Endothelial cell of umbilical vein (primary cell): ENCODE measurements at regions of chr12 and their contacts with region 1.

Region 1: DNA sequence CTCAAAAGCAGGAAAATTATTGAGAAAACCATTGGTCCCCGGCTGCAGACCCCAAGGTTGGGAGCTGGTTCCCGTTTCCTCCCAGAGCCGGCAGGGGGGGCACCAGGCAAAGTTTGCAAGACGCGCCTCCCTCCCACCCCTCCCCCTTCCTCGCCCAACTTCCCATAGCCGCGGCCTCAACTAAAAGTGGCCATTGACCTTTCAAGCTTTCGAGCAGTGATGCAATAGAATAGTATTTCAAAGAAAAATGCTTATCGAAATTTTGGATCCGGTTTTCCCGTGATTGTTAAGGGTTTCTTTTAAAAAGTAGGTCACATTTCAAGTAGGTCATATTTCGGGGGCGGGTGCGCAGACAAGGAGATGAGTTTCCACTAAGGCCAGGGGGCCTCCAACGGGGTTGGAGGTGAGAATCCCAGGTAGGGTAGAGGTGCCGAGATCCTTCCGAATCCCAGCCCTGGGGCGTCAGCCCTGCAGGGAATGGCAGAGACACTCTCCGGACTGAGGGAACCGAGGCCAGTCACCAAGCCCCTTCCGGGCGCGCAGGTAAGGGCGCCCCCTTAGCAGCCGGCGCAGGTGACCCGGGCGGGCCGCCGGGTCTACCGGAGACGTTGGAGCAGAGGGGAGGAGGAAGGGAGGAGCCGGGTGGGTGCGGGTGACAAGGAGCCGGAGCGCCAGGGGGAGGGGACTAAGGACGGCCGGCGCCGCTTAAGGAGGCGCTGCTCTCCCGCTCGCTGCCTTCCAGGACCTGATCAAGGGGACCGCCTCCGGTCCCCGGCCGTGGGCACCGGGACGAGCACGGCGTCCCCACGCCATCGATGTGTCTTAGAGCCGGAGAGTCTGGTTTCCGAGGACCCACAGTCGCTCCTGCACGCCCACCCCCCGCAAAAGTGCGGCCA is 2.6 kb upstream of the SOCS2 start:
- DNase-seq: peak; percentile 74
- H3K4me3 ChIP-seq: peak overlapping the region; percentile 35 to 71 (median 68)
- H3K27ac ChIP-seq: no peak overlapping the region
- H3K4me1 ChIP-seq: peaks cover 24% of the 10 kb centered on the region
- H3K27me3 ChIP-seq: peaks cover 30 to 37% of the 10 kb centered on the region in 2 experiments
- CTCF ChIP-seq: peak; percentile 54 to 91
- POLR2A ChIP-seq: no peak

Region 2: DNA sequence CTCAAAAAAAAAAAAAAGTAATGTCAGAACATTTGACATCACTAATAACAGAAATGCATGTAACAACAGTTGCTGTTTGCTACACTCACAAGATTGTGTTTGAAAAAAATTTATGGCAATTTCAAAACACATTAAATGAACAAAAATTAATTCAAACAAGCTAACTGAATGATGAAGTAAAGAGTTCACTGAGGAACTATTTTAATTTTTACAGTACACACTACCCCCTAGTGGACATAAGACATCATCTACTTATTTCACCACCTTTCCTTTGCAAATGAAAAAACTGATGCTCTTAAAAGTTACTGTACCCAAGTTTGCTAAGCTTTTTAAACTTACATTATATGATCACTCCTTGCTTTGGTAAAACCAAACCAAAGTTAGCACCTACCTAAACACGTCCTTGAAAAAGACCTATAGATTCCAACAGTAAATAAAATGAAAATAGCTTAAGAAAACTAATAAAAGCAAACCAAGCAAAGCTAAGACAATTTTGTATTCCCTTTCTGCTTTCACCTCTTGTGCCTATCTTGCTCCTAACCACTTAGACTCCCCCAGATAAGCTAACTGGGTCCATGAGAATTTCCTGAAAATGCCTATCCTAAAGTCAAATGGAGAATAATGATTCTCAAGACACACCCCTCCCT is 150.4 kb before region 1 on chr12:
- CTCF ChIA-PET with region 1: no interaction called
- POLR2A ChIA-PET with region 1: no interaction called
- dilution Hi-C with region 1: no loop called
- intact Hi-C with region 1: no loop called
- DNase-seq: peak; percentile 76
- H3K4me3 ChIP-seq: no peak overlapping the region
- H3K27ac ChIP-seq: no peak overlapping the region
- H3K4me1 ChIP-seq: peaks cover 2% of the 10 kb centered on the region
- H3K27me3 ChIP-seq: no peaks in the 10 kb centered on the region
- CTCF ChIP-seq: peak; percentile 33 to 38
- POLR2A ChIP-seq: no peak

Region 3: DNA sequence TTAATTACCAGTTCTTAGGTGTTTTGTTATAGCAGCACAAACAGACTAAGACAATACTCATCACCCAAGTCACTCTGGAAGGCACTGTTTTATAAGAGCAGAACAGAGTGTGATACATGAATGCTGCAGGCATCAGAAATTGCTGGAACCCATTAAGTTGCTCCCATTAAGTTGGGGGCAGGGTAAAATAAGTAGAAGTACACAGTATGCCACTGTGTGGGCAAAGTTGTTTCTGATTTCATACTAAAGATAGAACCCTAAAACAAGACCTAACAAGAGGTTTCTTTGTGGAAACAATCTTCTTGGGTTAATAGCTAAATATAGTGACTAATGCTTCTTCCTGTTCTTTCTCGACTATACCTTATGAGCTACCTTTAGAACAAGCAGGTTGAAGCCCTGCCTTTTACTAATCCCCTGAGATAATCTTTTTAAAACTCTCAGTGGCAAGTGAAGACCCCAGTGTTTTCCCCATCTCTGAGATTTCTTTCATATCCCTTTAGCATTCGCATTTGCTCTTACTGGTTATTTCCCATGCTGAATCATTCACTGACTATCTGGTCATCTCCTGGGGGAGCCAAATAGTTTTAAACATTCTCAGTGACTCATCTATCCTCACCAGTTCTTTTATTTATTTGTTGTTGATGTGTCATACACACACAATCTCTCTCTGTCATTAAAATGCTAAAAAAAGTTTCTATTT is 54.8 kb after region 1 on chr12:
- CTCF ChIA-PET with region 1: no interaction called
- POLR2A ChIA-PET with region 1: no interaction called
- dilution Hi-C with region 1: no loop called
- intact Hi-C with region 1: loop called (anchors 2 kb)
- DNase-seq: peak; percentile 54
- H3K4me3 ChIP-seq: no peak overlapping the region
- H3K27ac ChIP-seq: peak overlapping the region; percentile 57
- H3K4me1 ChIP-seq: peaks cover 9% of the 10 kb centered on the region
- H3K27me3 ChIP-seq: no peaks in the 10 kb centered on the region
- CTCF ChIP-seq: no peak
- POLR2A ChIP-seq: no peak

Region 4: GRCh38 chr12:93742110-93742934 is 172.4 kb after region 1 on chr12:
- CTCF ChIA-PET with region 1: interaction called, 14 read pairs
- POLR2A ChIA-PET with region 1: no interaction called
- dilution Hi-C with region 1: no loop called
- intact Hi-C with region 1: loop called (anchors 1 kb)
- DNase-seq: peak; percentile 80
- H3K4me3 ChIP-seq: peak overlapping the region; percentile 34 to 82 (median 69)
- H3K27ac ChIP-seq: no peak overlapping the region
- H3K4me1 ChIP-seq: peaks cover 8% of the 10 kb centered on the region
- H3K27me3 ChIP-seq: no peaks in the 10 kb centered on the region
- CTCF ChIP-seq: peak; percentile 24 to 38
- POLR2A ChIP-seq: no peak

Region 5: DNA sequence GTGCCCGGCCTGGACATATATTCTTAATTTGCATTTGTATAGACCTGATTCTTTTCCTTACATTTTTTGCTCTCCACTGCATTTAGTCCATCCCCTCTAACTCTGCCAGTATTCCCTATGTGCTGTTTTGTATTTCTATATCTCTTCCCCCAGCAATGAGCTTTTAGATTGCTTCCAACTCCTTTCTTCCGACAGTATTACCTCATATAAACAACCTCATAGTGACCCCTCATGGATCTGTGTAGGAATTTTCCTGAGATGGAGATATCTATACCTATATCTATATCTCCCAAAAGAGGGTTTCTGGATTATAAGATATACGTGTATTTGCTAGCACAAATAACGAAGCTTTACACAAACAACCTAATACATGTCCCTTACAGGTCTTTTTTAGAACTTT is 269.2 kb after region 1 on chr12:
- CTCF ChIA-PET with region 1: interaction called, 10 read pairs
- POLR2A ChIA-PET with region 1: no interaction called
- dilution Hi-C with region 1: no loop called
- intact Hi-C with region 1: loop called (anchors 5 kb)
- DNase-seq: no peak
- H3K4me3 ChIP-seq: no peak overlapping the region
- H3K27ac ChIP-seq: no peak overlapping the region
- H3K4me1 ChIP-seq: no peaks in the 10 kb centered on the region
- H3K27me3 ChIP-seq: no peaks in the 10 kb centered on the region
- CTCF ChIP-seq: no peak
- POLR2A ChIP-seq: no peak

Region 6: DNA sequence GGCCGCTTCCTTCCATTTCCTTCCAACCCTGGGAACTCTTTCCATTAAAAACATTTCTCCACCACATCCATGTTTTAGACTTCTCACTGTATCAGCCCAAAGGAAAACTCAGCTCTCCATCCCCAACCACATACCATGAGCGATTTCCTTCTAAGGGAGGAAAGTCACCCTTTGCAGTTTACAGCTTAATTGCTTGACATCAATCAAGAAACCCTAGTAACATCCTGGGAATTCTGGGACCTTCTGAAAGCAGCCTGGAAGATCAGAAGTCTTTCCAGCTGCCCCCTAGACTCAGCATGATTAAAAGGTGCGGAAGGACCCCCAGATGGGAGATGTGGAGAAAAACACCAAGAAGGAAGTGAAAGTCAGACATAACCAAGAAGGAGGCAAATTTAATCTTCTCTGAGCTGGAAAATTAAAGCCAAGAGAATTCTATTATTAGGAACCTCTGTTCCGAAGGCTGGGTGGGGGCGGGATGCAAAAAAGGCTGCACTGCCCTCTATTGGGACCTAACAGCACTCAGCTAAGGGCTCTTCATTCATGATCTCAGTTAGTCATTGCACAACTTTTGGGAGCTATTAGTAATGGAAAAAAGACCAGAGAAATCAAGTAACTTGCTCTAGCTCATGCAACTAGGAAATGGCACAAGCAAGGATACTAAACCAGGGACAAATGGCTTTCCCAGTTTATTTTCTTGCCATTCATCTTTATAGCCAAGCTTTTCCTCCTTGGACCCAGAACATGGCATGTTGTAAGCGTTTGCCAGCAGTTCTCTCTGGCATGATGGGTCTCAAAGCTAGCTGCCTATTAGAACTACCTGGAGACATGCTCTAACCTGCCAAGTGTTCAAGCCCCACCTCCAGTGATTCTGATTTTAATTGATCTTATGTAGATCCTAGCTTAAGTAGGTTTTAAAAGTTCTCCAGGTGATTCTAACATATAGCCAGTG is 505.4 kb after region 1 on chr12:
- CTCF ChIA-PET with region 1: interaction called, 21 read pairs
- POLR2A ChIA-PET with region 1: no interaction called
- dilution Hi-C with region 1: no loop called
- intact Hi-C with region 1: loop called (anchors 1 kb)
- DNase-seq: peak; percentile 28
- H3K4me3 ChIP-seq: no peak overlapping the region
- H3K27ac ChIP-seq: no peak overlapping the region
- H3K4me1 ChIP-seq: no peaks in the 10 kb centered on the region
- H3K27me3 ChIP-seq: peaks cover 8 to 9% of the 10 kb centered on the region in 2 experiments
- CTCF ChIP-seq: peak; percentile 43 to 46
- POLR2A ChIP-seq: no peak